OCI-LY7 (cell line): ENCODE measurements at regions of chr14 and their contacts with region 1.

Region 1: GRCh38 chr14:103518422-103519042 is 4.1 kb downstream of the CKB start:
- DNase-seq: peak; percentile 66
- H3K4me3 ChIP-seq: no peak overlapping the region
- H3K27ac ChIP-seq: no peak overlapping the region
- H3K4me1 ChIP-seq: peaks cover 17% of the 10 kb centered on the region
- CTCF ChIP-seq: peak; percentile 90

Region 2: DNA sequence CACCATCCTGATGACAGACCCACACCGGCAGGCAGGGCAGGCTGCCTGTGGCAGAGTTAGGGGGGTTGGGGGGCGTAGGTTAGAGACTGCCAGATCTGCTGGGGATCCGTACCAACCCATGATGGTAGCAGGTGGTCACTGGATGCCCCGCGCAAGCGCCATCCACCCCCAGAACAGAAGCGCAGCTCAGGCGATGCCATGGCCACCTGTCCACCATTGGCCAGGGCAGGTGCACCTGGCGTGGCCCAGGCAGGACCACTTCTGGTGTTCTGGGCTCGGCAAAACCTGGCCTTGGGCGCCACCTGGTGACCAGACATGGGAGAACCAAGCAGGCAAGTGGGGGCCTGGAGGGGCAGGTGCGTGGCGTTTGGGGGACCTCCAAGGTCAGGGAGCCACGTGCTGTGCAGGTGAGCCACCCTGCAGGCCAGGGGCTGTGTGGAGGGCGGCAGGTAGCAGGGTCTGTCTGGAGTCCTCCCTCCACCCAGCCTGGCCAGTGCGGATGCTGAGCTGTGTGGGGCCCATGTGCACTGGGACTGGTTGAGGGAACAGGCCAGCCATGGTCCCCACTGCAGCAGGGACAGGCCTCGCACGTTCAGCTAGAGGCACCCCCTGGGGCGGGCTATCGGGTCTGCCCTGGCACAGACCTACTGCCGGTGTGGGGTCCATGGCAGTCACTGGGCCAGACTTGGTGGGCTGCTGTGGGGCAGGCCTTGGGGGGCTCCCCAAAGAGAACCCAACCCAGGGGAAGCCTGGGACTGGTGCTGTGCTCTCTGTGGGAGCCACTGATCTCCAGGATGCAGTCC is 28.3 kb after region 1 on chr14:
- CTCF ChIA-PET with region 1: interaction called, 3 read pairs
- POLR2A ChIA-PET with region 1: no interaction called
- intact Hi-C with region 1: loop called (anchors 1 kb)
- DNase-seq: peak; percentile 71
- H3K4me3 ChIP-seq: no peak overlapping the region
- H3K27ac ChIP-seq: no peak overlapping the region
- H3K4me1 ChIP-seq: no peaks in the 10 kb centered on the region
- CTCF ChIP-seq: peak; percentile 92

Region 3: GRCh38 chr14:103847451-103848188 is 329.1 kb after region 1 on chr14 and contains the start of gene PPP1R13B:
- CTCF ChIA-PET with region 1: no interaction called
- POLR2A ChIA-PET with region 1: no interaction called
- intact Hi-C with region 1: no loop called
- DNase-seq: peak; percentile 93
- H3K4me3 ChIP-seq: peak within 1 kb of the TSS; percentile 80
- H3K27ac ChIP-seq: no peak within 1 kb of the TSS
- H3K4me1 ChIP-seq: peaks cover 11% of the 10 kb centered on the region
- CTCF ChIP-seq: no peak
- total RNA-seq, gene PPP1R13B: 8.2 and 9.7 TPM in 2 replicates